ENCODE measurements at regions of chr3 and their contacts with region 1.

Region 1: DNA sequence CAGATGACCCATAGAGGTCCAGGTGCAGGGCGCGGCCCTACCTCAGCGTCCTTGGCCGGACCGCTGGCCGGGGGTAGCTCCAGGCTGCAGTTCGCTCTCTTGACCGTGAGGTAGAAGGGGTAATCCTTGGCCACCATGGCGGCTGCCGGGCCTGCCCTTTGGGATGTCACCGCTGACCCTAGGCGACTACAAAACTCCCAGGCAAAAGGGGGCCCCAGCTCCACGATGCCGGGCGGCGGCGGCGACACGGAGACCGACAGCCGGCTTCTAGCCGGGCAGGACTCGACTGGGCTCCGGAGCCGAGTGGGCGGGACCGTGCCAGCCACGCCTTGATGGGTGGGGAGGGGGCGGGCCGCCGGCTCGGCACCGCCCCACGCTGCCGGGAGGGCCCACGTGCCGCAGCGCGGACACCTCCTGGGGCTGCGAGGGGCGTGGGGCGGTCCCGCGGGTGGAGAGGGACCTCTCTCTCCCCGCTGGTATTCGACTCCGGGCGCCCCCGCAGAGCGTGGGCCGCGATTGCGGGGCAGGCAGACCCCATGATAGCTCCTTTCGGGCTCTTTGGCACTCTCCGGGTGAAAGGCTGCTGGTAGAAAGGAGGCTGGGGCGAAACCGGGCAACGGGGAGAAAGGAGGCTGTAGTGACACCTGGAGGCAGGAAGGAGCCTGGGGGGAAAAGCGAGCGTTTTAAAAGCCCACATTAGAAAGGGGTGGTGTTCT is at the start of gene ARHGEF3:
- DNase-seq: peak; percentile 83 to 90
- ATAC-seq: peak; percentile 94 to 98 (median 96)
- H3K4me3 ChIP-seq: peak within 1 kb of the TSS; percentile 71 to 94 (median 86)
- H3K27ac ChIP-seq: peak within 1 kb of the TSS in 9 of 10 donors; percentile 36 to 84 (median 79)
- H3K4me1 ChIP-seq: peaks cover 0 to 52% (median 42%) of the 10 kb centered on the region in 9 donors
- H3K27me3 ChIP-seq: no peaks in the 10 kb centered on the region
- CTCF ChIP-seq: peak; percentile 16 to 60 (median 42)
- total RNA-seq, gene ARHGEF3: 12.8 to 26.1 (median 17.9) TPM

Region 2: DNA sequence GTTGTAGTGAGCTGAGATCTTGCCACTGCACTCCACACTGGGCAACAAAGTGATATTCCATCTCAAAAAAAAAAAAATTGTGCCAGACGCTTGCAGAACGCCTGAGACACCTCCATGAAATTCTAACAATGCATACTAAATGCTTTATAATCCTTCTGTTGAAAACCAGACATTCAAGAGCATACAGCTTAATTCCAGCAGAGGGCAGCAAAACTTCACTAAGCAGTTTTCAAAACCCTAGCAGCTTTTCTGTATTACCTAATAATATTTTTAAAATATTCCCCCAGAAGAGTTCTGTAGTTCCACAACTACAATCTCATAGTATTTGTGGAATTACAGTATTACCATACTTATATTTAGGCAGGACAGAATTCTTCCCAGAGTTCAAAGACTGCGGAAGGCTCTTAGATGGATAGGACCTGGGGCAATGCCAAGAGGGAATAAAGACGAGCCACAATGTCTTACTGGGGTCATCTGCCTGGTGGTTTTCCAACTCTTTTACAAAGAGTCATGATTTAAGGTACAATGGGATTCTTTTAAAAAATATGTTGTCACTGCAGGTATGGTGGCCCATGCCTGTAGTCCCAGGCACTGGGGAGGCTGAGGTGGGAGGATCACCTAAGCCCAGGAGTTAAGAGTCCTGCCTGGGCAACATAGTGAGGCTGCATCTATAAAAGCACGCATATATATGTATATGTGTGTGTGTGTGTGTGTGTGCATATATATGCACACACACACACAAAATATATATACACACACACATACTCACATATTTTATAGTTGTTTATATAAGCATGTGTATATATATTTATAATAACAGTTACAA is 99.1 kb before region 1 on chr3:
- intact Hi-C with region 1: loop called (anchors 1 to 10 kb)
- DNase-seq: peak in 1 of 2 donors; percentile 57
- ATAC-seq: peak in 7 of 8 donors; percentile 52 to 75 (median 75)
- H3K4me3 ChIP-seq: no peak overlapping the region
- H3K27ac ChIP-seq: no peak overlapping the region
- H3K4me1 ChIP-seq: peaks cover 0 to 4% (median 0%) of the 10 kb centered on the region in 9 donors
- H3K27me3 ChIP-seq: no peaks in the 10 kb centered on the region
- CTCF ChIP-seq: peak; percentile 73 to 96 (median 90)

Region 3: GRCh38 chr3:56758539-56758981 is 43.3 kb before region 1 on chr3:
- intact Hi-C with region 1: loop called in 3 of 10 experiments (anchors 5 kb)
- DNase-seq: no peak
- ATAC-seq: peak in 3 of 8 donors; percentile 28 to 67 (median 30)
- H3K4me3 ChIP-seq: peak overlapping the region in 1 of 10 donors; percentile 5
- H3K27ac ChIP-seq: peak overlapping the region in 4 of 10 donors; percentile 0 to 84 (median 28)
- H3K4me1 ChIP-seq: peaks cover 12 to 90% (median 40%) of the 10 kb centered on the region in 9 donors
- H3K27me3 ChIP-seq: no peaks in the 10 kb centered on the region
- CTCF ChIP-seq: no peak

Region 4: DNA sequence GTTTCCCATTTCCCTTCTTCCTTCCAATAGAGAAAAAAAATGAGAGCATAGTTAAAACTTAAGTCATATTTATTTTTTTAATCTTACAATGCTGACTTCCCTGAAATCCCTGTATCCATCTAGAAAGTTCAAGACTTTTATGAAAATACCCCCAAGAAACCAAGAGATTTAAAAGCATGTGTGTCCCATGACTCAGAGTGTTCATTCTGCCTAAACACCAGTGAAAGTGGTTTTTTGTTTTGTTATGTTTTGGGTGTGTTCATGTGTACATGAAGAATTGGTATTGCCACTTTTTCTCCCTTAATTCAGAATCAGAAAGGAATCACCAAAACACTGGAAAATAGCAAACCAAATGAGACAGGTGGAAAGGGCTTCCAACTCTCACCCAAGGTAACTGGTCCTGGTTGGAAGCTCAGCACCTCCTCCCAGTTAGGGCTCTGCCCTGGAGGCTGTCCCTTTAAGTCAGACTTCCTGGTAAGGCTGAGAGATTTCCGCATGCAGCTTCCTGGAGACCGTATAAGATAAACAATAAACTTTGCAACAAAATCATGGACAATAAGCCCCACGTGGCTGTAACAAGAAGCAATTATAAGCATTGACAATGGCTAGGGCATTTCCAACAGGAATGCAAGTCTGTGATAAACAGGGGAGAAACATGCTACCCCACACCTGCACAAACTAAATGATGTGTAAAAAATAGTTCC is 121.9 kb after region 1 on chr3:
- intact Hi-C with region 1: loop called in 5 of 10 experiments (anchors 5 to 10 kb)
- DNase-seq: peak in 1 of 2 donors; percentile 74
- ATAC-seq: peak; percentile 64 to 88 (median 84)
- H3K4me3 ChIP-seq: no peak overlapping the region
- H3K27ac ChIP-seq: peak overlapping the region in 9 of 10 donors; percentile 41 to 86 (median 73)
- H3K4me1 ChIP-seq: peaks cover 22 to 84% (median 74%) of the 10 kb centered on the region in 9 donors
- H3K27me3 ChIP-seq: no peaks in the 10 kb centered on the region
- CTCF ChIP-seq: no peak

Region 5: DNA sequence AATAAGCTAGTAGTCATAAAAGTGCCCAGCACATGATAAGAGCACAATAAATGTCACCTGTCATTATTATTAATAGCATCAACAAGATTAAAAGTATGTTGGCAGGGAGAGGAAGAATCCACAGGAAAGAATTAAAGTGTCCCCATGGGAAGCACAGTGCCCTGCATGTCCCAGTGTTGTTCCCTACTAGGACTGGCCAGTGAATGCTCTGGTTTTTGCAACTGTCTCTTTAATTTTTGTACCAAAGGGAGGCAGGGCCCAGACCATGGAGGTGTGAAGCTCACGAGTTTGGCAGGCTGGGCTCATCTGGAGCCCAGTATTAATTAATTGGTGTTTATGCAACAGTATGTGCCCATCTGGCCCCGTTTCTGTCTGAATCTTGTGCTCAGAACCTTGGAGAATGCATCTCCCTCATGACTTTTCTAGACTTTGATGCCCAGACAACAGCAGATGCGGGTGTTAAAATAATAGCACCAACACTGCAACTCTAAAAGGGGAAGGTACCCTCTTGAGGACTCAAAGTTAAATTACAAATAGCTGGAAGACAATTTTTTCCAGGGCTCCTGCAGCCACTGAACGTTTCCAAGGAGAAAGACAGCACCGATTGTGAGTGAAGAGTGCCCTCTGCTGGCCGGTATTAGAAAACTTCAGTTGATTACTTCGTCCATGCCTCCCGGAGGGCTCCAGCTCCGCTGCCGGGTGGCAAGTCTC is 186.8 kb after region 1 on chr3:
- intact Hi-C with region 1: loop called (anchors 2 to 10 kb)
- DNase-seq: peak; percentile 65 to 87
- ATAC-seq: peak; percentile 81 to 93 (median 89)
- H3K4me3 ChIP-seq: peak overlapping the region in 3 of 10 donors; percentile 6 to 17 (median 15)
- H3K27ac ChIP-seq: peak overlapping the region in 3 of 10 donors; percentile 20 to 32 (median 23)
- H3K4me1 ChIP-seq: peaks cover 0 to 42% (median 32%) of the 10 kb centered on the region in 9 donors
- H3K27me3 ChIP-seq: peaks cover 0 to 15% (median 0%) of the 10 kb centered on the region in 7 donors
- CTCF ChIP-seq: peak; percentile 75 to 90 (median 86)

Region 6: GRCh38 chr3:57192028-57192427 is 390.2 kb after region 1 on chr3:
- intact Hi-C with region 1: no loop called
- DNase-seq: no peak
- ATAC-seq: no peak
- H3K4me3 ChIP-seq: no peak overlapping the region
- H3K27ac ChIP-seq: no peak overlapping the region
- H3K4me1 ChIP-seq: no peaks in the 10 kb centered on the region
- H3K27me3 ChIP-seq: peaks cover 0 to 16% (median 0%) of the 10 kb centered on the region in 7 donors
- CTCF ChIP-seq: no peak

Measured in heart right ventricle (tissue), 16 donors.